BJ (cell line): ENCODE measurements at regions of chr5 and their contacts with region 1.

Region 1: GRCh38 chr5:1140171-1140817 is 28.4 kb upstream of the SLC12A7 start:
- DNase-seq: no peak
- H3K4me3 ChIP-seq: no peak overlapping the region
- H3K27me3 ChIP-seq: no peaks in the 10 kb centered on the region; the same call in 1 of the 2 replicates
- CTCF ChIP-seq: peak; percentile 83

Region 2: DNA sequence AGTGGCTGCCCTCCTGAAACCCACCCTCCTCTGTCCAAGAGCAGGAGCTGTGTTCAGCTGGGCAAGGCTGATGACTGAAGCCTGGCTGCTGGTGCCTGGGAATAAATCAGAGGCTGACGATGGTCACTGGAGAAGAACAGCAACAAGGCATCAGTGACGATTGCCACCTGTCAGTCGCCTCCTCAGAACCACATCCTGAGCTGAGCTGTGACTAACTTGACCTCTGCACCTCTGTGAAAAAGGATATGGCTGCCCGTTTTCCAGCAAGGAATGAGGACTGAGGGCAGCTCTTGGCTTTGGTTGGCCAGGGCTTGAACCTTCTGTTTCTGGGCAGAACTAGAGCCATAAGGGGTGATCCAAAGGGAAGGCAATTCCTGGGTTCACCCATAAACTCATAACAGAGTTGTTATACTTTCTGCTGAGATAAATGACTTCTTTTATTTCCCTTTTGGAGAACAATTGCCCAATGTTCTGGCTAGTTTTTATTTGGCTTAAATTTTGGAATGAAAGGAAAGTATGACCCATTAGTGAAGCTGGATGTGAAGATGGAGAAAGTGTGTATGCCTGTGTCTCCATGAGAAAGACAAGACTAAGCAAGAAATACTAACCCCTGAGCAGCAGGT is 207.6 kb before region 1 on chr5:
- CTCF ChIA-PET with region 1: interaction called, 71 read pairs
- POLR2A ChIA-PET with region 1: no interaction called
- DNase-seq: no peak
- H3K4me3 ChIP-seq: no peak overlapping the region
- H3K27me3 ChIP-seq: peaks cover 17% of the 10 kb centered on the region
- CTCF ChIP-seq: no peak

Region 3: GRCh38 chr5:945691-946551 is 194.4 kb before region 1 on chr5:
- CTCF ChIA-PET with region 1: interaction called, 13 read pairs
- POLR2A ChIA-PET with region 1: no interaction called
- DNase-seq: no peak
- H3K4me3 ChIP-seq: no peak overlapping the region
- H3K27me3 ChIP-seq: peaks cover 48% of the 10 kb centered on the region
- CTCF ChIP-seq: no peak

Region 4: GRCh38 chr5:1067141-1068121 is 72.9 kb before region 1 on chr5:
- CTCF ChIA-PET with region 1: no interaction called
- POLR2A ChIA-PET with region 1: no interaction called
- DNase-seq: no peak
- H3K4me3 ChIP-seq: no peak overlapping the region
- H3K27me3 ChIP-seq: no peaks in the 10 kb centered on the region
- CTCF ChIP-seq: no peak

Region 5: GRCh38 chr5:1152156-1152555 is 11.9 kb after region 1 on chr5:
- CTCF ChIA-PET with region 1: interaction called, 15 read pairs
- POLR2A ChIA-PET with region 1: no interaction called
- DNase-seq: no peak
- H3K4me3 ChIP-seq: no peak overlapping the region
- H3K27me3 ChIP-seq: peaks cover 28% of the 10 kb centered on the region
- CTCF ChIP-seq: no peak